Panc1 (cell line): ENCODE measurements at regions of chr7 and their contacts with region 1.

Region 1: GRCh38 chr7:100538654-100539435 is at the start of gene AGFG2:
- DNase-seq: peak; percentile 99
- ATAC-seq: peak; percentile 99
- H3K4me3 ChIP-seq: peak within 1 kb of the TSS; percentile 70 to 71
- H3K27ac ChIP-seq: peak within 1 kb of the TSS; percentile 72
- H3K4me1 ChIP-seq: peaks cover 20% of the 10 kb centered on the region
- H3K27me3 ChIP-seq: no peaks in the 10 kb centered on the region
- CTCF ChIP-seq: no peak
- total RNA-seq, gene AGFG2: 42.5 TPM

Region 2: DNA sequence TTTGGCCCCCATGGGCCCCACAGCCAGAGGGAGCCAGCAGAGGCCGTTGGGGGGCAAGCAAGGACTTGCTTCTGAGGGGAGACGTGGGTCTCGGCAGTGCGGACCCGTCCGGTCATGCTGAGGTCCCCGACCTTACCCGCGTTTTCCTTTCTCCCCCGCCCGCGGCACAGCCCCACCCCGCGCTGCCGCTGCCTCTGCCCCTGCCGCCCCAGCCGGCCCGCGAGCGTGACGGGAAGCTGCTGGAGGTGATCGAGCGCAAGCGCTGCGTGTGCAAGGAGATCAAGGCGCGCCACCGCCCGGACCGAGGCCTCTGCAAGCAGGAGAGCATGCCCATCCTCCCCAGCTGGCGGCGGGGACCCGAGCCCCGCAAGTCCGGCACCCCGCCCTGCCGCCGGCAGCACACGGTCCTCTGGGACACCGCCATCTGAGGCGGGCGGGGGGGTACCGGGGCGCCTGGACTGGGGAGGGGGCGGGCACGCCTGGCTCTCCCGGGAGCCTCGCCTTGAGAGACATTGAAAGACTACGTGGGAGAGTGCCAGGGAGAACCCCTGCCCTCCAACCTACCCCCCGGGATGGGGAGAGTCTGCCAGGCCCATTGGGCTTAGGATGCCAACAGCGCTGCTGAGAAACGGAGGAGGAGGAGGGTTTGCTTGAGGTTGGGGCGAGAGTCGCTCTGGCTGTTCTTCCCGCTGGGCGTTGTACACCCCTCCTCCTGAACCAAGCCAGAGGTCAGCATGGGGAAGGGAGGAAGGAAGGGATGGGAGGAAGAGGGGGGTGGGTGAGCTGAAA is 45.2 kb before region 1 on chr7:
- CTCF ChIA-PET with region 1: no interaction called
- POLR2A ChIA-PET with region 1: interaction called, 10 read pairs
- in situ Hi-C with region 1: no loop called
- intact Hi-C with region 1: no loop called
- DNase-seq: no peak
- ATAC-seq: no peak
- H3K4me3 ChIP-seq: no peak overlapping the region
- H3K27ac ChIP-seq: no peak overlapping the region
- H3K4me1 ChIP-seq: no peaks in the 10 kb centered on the region
- H3K27me3 ChIP-seq: no peaks in the 10 kb centered on the region
- CTCF ChIP-seq: no peak

Region 3: GRCh38 chr7:100719523-100720319 is 180.9 kb after region 1 on chr7:
- CTCF ChIA-PET with region 1: no interaction called
- POLR2A ChIA-PET with region 1: interaction called, 14 read pairs
- in situ Hi-C with region 1: no loop called
- intact Hi-C with region 1: no loop called
- DNase-seq: no peak
- ATAC-seq: peak; percentile 74
- H3K4me3 ChIP-seq: no peak overlapping the region
- H3K27ac ChIP-seq: no peak overlapping the region
- H3K4me1 ChIP-seq: no peaks in the 10 kb centered on the region
- H3K27me3 ChIP-seq: no peaks in the 10 kb centered on the region
- CTCF ChIP-seq: no peak